ENCODE measurements at regions of chr2 and their contacts with region 1.

Region 1: DNA sequence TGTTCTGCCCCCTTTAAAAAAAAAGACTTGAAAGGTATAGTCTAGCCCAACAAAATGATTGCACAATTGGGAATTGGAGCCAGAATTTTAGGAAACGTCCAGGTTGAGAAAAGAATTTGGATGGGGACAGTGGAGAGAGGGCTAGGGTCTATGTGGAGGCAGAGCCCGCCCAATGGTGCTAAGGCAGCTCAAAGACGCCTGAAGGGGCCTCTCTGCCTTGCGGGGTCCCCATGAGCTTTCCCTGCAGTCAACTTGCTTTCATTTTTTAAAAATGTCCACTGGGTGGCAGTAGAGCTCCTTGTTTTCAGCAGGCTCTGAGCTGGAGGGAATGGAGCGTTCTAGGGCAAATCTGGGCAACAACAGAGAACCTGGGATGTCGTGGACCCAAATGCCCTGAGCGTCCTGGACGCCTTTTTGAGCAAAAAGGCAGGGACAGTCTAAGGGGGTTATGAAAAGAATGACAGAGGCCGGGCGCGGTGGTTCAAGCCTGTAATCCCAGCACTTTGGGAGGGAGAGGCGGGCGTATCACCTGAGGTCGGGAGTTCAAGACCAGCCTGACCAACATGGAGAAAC is 40.2 kb upstream of the ITM2C start:
- DNase-seq: peak; percentile 60 to 66
- H3K4me3 ChIP-seq: no peak overlapping the region
- H3K27ac ChIP-seq: no peak overlapping the region
- H3K4me1 ChIP-seq: peaks cover 0 to 6% (median 2%) of the 10 kb centered on the region in 4 experiments; a peak in 4 of 7 replicates
- H3K27me3 ChIP-seq: no peaks in the 10 kb centered on the region; a peak in 2 of 7 replicates
- CTCF ChIP-seq: peak; percentile 8 to 90 (median 72)
- EP300 ChIP-seq: no peak
- POLR2A ChIP-seq: no peak
- RAD21 ChIP-seq: peak; percentile 92

Region 2: DNA sequence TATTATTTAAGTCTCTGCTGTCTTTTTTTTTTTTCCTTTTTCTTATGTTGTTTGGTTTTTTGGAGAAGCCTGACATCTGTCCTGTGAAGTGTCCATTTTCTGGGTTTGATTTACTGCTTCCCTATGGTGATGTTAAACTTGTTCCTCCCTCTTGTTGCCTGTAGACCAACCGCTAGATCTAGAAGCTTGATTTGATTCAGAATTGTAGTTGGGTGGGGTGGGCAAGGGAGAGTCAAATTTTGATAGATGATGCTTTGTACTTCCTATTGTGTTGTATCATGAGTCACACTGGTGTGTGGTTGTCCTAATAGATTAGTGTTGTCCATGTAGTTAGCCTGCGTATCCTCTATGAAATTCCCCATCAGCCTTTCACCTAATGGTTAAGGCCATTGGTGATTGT is 76.4 kb before region 1 on chr2:
- CTCF ChIA-PET with region 1: no interaction called
- POLR2A ChIA-PET with region 1: no interaction called
- DNase-seq: no peak
- H3K4me3 ChIP-seq: no peak overlapping the region
- H3K27ac ChIP-seq: no peak overlapping the region
- H3K4me1 ChIP-seq: no peaks in the 10 kb centered on the region
- H3K27me3 ChIP-seq: no peaks in the 10 kb centered on the region
- CTCF ChIP-seq: no peak
- EP300 ChIP-seq: no peak
- POLR2A ChIP-seq: no peak
- RAD21 ChIP-seq: no peak

Region 3: GRCh38 chr2:230787101-230787500 is 37.4 kb before region 1 on chr2:
- CTCF ChIA-PET with region 1: no interaction called
- POLR2A ChIA-PET with region 1: no interaction called
- DNase-seq: no peak
- H3K4me3 ChIP-seq: no peak overlapping the region
- H3K27ac ChIP-seq: no peak overlapping the region
- H3K4me1 ChIP-seq: peaks cover 0 to 4% (median under 1%) of the 10 kb centered on the region in 4 experiments; a peak in 3 of 7 replicates
- H3K27me3 ChIP-seq: no peaks in the 10 kb centered on the region
- CTCF ChIP-seq: no peak
- EP300 ChIP-seq: no peak
- POLR2A ChIP-seq: no peak
- RAD21 ChIP-seq: no peak

Region 4: DNA sequence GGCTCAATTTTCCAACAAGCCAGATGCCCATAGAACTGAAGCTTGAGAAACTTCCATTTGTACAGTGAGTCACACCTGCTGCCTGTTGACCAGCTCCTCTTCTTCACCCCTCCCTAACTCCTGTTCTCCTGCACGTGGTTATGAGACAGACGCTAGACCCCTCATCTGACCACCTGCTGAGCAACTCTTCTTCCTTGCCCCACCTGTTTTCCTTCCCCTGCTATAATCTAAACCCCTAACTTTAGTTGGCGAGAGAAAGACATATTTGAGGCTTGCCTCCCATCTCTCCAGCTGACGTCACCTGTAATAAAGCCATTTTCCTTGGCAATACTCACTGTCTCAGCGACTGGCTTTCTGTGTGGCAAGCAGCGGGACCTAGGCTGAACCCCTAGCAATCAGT is 18.0 kb after region 1 on chr2:
- CTCF ChIA-PET with region 1: interaction called, 56 read pairs
- POLR2A ChIA-PET with region 1: interaction called, 4 read pairs
- DNase-seq: no peak
- H3K4me3 ChIP-seq: no peak overlapping the region
- H3K27ac ChIP-seq: no peak overlapping the region
- H3K4me1 ChIP-seq: no peaks in the 10 kb centered on the region
- H3K27me3 ChIP-seq: no peaks in the 10 kb centered on the region; a peak in 1 of 7 replicates
- CTCF ChIP-seq: no peak
- EP300 ChIP-seq: no peak
- POLR2A ChIP-seq: no peak
- RAD21 ChIP-seq: no peak

Measured in H1 (cell line).